ENCODE measurements at regions of chr6 and their contacts with region 1.

Region 1: GRCh38 chr6:35719830-35720733 is 16.8 kb upstream of the ARMC12 start:
- DNase-seq: peak; percentile 69
- H3K4me3 Mint-ChIP-seq: peak overlapping the region; percentile 48
- H3K27ac Mint-ChIP-seq: peak overlapping the region; percentile 89
- H3K4me1 Mint-ChIP-seq: peaks cover 68% of the 10 kb centered on the region
- H3K27me3 Mint-ChIP-seq: no peaks in the 10 kb centered on the region

Region 2: DNA sequence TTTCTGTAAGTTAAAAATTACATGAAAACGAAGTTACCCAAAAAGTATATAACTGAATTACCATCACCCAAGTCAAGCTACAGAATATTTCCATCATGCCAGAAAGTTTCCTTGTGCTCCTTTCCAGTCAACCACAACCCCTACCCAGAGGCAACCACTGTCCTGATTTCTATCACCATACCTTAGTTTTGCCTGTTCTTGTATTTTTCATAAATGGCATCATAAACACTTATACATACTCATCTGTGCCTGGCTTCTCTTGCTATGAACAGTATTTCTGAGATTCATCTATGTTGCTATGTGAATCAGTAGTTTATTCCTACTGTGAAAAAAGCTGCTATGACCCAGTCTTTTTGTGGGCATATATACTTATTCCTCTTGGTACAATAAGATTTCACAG is 38.8 kb before region 1 on chr6:
- intact Hi-C with region 1: loop called (anchors 1 kb)
- DNase-seq: peak; percentile 57
- H3K4me3 Mint-ChIP-seq: no peak overlapping the region
- H3K27ac Mint-ChIP-seq: peak overlapping the region; percentile 10
- H3K4me1 Mint-ChIP-seq: peaks cover 41% of the 10 kb centered on the region
- H3K27me3 Mint-ChIP-seq: no peaks in the 10 kb centered on the region

Region 3: DNA sequence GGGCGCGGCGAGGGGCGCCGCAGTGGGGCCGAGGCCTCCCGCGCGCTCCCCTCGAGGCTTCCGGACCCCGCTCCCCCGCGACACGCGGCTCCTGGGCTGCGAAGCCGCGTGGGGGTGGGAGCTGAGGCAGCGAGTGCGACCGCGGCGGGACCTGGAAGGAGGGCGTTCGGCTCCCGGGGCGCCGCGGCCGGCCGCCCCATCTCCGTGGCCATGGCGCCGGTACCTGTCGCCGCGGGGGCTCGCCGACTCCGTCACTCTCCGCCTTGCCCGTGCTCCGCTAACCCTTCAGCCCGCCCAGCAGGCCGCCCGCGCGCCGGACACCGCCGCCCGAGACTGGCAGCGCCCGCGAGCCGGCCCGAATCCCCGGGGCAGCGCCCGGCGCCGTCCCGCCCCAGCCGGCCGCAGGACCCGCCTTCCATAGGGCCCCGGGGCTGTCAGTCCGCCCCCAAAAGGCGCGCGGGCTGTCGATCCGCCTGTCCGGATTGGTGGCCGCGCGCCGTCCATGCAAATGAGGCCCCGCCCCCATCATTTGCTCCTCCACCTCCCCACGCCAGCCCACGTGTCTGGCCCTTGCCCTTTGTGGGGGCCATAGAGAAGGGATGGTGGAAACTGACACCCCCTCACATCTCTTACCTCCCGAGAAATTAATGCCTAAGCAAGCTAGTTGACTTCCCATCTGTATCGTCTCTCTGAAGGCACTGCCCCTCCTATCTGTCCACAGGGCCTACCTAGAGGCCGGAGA is 31.3 kb before region 1 on chr6 and contains the start of gene FKBP5:
- intact Hi-C with region 1: loop called (anchors 2 kb)
- DNase-seq: peak; percentile 97
- H3K4me3 Mint-ChIP-seq: peak within 1 kb of the TSS; percentile 93
- H3K27ac Mint-ChIP-seq: peak within 1 kb of the TSS; percentile 92
- H3K4me1 Mint-ChIP-seq: peaks cover 15% of the 10 kb centered on the region
- H3K27me3 Mint-ChIP-seq: no peaks in the 10 kb centered on the region
- total RNA-seq, gene FKBP5: 85.0 and 85.1 TPM in 2 replicates

Region 4: DNA sequence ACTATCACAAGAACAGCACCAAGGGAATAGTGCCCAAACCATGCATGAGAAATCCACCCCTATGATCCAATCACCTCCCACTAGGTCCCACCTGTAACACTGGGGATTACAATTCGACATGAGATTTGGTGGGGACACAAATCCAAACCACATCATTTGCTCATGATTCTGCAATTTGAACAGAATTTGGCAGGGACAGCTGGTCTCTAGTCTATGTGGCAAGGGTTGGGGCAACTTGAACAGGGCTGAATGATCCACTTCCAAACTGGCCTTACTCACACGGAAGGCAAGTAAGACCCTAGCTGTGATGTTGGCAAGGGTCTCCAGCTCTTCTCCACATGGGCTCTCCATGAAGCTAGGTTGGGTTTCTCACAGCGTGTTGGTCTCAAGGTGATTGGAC is 21.2 kb before region 1 on chr6:
- intact Hi-C with region 1: no loop called
- DNase-seq: no peak
- H3K4me3 Mint-ChIP-seq: no peak overlapping the region
- H3K27ac Mint-ChIP-seq: no peak overlapping the region
- H3K4me1 Mint-ChIP-seq: peaks cover 6% of the 10 kb centered on the region
- H3K27me3 Mint-ChIP-seq: no peaks in the 10 kb centered on the region

Region 5: DNA sequence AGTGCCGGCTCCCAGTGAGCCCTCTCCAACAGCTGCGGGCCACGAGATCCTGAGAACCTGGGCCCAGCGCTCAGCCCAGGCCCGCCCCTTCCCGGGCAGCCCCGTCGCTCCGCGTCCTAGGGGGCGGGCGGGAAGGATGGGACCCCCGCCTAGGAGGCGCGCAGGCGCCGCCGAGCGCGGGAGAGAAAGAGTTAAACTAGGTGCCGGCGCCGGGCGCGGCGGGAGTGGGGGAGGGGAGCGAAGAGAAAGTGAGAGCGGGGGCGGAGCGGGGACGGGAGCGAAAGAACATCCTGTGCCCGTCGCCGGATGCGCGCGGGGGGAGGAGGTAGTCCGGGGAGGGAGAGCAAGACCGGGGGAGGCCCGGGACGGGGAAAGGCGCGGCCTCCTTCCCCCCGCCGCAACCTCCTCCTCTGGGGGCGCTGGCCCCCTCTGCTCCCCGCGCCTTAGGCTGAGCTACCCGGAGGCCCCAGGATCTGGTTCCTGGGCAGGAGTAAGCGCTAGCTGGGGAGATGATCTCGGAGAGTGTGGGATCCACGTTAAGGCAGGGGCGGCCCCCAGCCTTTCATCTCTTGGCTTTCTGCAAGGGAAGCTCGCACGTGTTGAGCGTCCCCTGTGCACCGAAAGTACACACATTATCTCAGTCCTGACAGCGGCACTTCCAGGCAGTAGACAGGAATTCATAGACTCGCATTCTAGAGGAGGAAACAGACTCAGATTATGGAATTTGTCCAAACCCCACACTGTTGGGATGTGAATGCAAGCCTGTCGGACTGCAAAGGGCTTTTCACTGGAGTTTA is 11.9 kb after region 1 on chr6:
- intact Hi-C with region 1: loop called (anchors 1 kb)
- DNase-seq: peak; percentile 98
- H3K4me3 Mint-ChIP-seq: peak overlapping the region; percentile 90
- H3K27ac Mint-ChIP-seq: peak overlapping the region; percentile 94
- H3K4me1 Mint-ChIP-seq: peaks cover 56% of the 10 kb centered on the region
- H3K27me3 Mint-ChIP-seq: no peaks in the 10 kb centered on the region